Activated CD4-positive, alpha-beta T cell treated with anti-CD3 and anti-CD28 coated beads for 36 hours (primary cell): ENCODE measurements at regions of chr13 and their contacts with region 1.

Region 1: DNA sequence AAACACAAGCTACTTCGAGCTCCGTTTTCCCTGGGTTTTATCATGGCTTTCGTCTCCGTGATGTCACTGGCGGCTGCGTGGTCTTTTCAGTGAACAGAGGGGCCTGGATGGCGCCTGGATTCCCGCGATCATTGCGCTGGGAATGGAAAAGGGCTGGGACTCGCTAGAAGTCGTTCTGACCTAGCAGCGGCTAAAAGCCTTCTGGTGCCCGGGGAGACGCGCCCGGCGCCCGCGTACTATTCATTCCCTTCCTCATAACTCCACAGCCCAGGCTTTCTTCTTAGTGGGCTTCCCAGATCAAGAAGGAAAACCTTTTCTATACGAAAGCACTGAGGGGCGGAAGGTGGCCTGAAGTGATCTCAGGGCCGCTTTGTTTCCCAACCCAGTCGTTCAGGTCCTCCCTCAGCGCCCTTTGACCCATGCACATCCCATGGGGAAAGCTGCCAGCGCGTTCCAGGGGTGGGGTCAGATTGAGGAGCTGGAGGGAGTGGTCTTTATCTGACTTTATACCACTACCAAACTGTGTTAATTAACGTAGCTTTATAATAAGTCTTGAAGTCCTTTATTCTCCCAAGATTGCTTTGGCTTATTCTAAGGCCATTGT is 96.6 kb downstream of the ELF1 start:
- DNase-seq: no peak
- ATAC-seq: no peak
- H3K4me3 Mint-ChIP-seq: peak overlapping the region; percentile 32
- H3K27ac Mint-ChIP-seq: peak overlapping the region; percentile 76
- H3K4me1 Mint-ChIP-seq: peaks cover 20% of the 10 kb centered on the region
- H3K27me3 Mint-ChIP-seq: no peaks in the 10 kb centered on the region

Region 2: GRCh38 chr13:40770934-40771618 is 151.5 kb before region 1 on chr13 and contains the start of gene MRPS31:
- CTCF ChIA-PET with region 1: interaction called, 3 read pairs
- POLR2A ChIA-PET with region 1: no interaction called
- intact Hi-C with region 1: loop called (anchors 2 kb)
- DNase-seq: peak; percentile 97
- ATAC-seq: peak; percentile 99
- H3K4me3 Mint-ChIP-seq: peak within 1 kb of the TSS; percentile 89
- H3K27ac Mint-ChIP-seq: peak within 1 kb of the TSS; percentile 97
- H3K4me1 Mint-ChIP-seq: peaks cover 30% of the 10 kb centered on the region
- H3K27me3 Mint-ChIP-seq: no peaks in the 10 kb centered on the region
- total RNA-seq, gene MRPS31: 45.8 to 46.1 TPM

Region 3: GRCh38 chr13:40777166-40777808 is 145.3 kb before region 1 on chr13:
- CTCF ChIA-PET with region 1: interaction called, 6 read pairs
- POLR2A ChIA-PET with region 1: no interaction called
- intact Hi-C with region 1: loop called in 1 of 2 experiments (anchors 2 kb)
- DNase-seq: peak; percentile 57
- ATAC-seq: peak; percentile 49
- H3K4me3 Mint-ChIP-seq: peak overlapping the region; percentile 52
- H3K27ac Mint-ChIP-seq: peak overlapping the region; percentile 98
- H3K4me1 Mint-ChIP-seq: peaks cover 29% of the 10 kb centered on the region
- H3K27me3 Mint-ChIP-seq: no peaks in the 10 kb centered on the region

Region 4: GRCh38 chr13:40910324-40911050 is 12.1 kb before region 1 on chr13:
- CTCF ChIA-PET with region 1: interaction called, 3 read pairs
- POLR2A ChIA-PET with region 1: no interaction called
- intact Hi-C with region 1: loop called in 1 of 2 experiments (anchors 1 kb)
- DNase-seq: peak; percentile 45
- ATAC-seq: peak; percentile 90
- H3K4me3 Mint-ChIP-seq: no peak overlapping the region
- H3K27ac Mint-ChIP-seq: no peak overlapping the region
- H3K4me1 Mint-ChIP-seq: peaks cover 20% of the 10 kb centered on the region
- H3K27me3 Mint-ChIP-seq: no peaks in the 10 kb centered on the region

Region 5: GRCh38 chr13:40982772-40983171 is 60.2 kb after region 1 on chr13:
- CTCF ChIA-PET with region 1: interaction called, 5 read pairs
- POLR2A ChIA-PET with region 1: interaction called, 4 read pairs
- intact Hi-C with region 1: loop called in 1 of 2 experiments (anchors 2 kb)
- DNase-seq: peak; percentile 70
- ATAC-seq: peak; percentile 62
- H3K4me3 Mint-ChIP-seq: peak overlapping the region; percentile 91
- H3K27ac Mint-ChIP-seq: peak overlapping the region; percentile 92
- H3K4me1 Mint-ChIP-seq: peaks cover 66% of the 10 kb centered on the region
- H3K27me3 Mint-ChIP-seq: no peaks in the 10 kb centered on the region

Region 6: DNA sequence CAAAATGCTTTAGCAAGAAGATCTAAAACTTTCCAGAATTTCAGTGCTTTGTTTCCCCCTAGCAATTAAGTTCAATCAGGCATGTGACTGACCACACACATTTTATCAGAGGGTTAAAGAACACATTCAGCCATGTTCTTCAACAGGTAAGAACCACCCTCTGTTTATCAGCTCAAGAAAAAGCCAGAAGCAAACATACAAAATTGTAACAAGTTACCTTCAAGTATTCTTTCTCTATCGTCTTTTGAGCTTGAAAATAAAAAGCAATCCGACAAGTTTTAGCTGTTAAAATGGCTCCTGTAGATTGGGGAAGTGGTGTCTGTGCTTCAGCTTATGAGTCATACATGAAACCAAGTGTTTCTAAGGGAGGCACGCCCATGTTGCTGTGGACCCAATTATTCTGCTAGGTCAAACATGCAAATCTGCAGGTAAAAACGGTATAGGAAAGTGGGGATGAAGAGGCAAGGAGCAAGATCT is 96.5 kb after region 1 on chr13 and contains the start of gene ELF1:
- CTCF ChIA-PET with region 1: interaction called, 4 read pairs
- POLR2A ChIA-PET with region 1: interaction called, 3 read pairs
- intact Hi-C with region 1: loop called (anchors 1 to 5 kb)
- DNase-seq: peak; percentile 67
- ATAC-seq: peak; percentile 87
- H3K4me3 Mint-ChIP-seq: peak within 1 kb of the TSS; percentile 88
- H3K27ac Mint-ChIP-seq: peak within 1 kb of the TSS; percentile 96
- H3K4me1 Mint-ChIP-seq: peaks cover 31% of the 10 kb centered on the region
- H3K27me3 Mint-ChIP-seq: no peaks in the 10 kb centered on the region
- total RNA-seq, gene ELF1: 75.2 to 87.0 TPM

Region 7: DNA sequence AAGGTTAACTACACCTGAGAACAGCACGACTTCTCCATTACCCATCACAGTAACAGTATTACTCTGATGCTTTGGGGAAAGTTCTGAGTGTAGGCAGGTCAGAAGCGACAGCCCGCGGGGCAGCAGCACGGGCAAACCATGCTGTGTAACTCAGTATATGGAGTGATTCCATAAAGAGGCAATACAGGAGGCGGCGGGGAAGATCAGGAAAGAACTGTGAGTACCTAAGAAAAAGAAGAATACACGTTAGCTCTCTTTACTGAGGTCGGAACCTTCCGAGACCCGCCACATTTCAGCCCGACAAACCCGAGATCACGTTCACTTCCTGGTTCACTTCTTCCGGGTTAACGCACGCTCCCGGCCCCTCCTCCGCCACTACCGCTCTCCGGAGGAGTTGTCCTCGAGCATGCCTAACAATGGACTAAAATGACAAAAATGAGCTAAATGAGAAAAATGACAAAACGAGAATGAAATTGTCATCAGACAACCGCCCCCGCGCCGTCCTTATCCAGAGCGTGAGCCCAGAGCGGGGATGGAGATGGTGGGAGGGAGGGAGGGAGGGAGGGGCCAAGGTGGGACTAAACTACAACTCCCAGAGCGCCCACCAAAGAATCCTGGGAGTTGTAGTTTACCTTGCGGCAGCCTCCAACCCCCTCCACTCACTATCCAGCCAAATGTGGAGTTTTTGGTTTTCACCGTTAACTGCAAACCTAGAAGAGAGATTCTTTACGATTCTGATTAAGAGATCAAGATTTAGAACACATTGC is 340.9 kb after region 1 on chr13 and contains the start of gene MTRF1:
- CTCF ChIA-PET with region 1: no interaction called
- POLR2A ChIA-PET with region 1: no interaction called
- intact Hi-C with region 1: loop called in 1 of 2 experiments (anchors 5 kb)
- DNase-seq: peak; percentile 89
- ATAC-seq: peak; percentile 93
- H3K4me3 Mint-ChIP-seq: peak within 1 kb of the TSS; percentile 80
- H3K27ac Mint-ChIP-seq: peak within 1 kb of the TSS; percentile 95
- H3K4me1 Mint-ChIP-seq: peaks cover 12% of the 10 kb centered on the region
- H3K27me3 Mint-ChIP-seq: no peaks in the 10 kb centered on the region
- total RNA-seq, gene MTRF1: 19.7 to 22.1 TPM

Region 8: GRCh38 chr13:42275098-42275471 is 1352.5 kb after region 1 on chr13:
- CTCF ChIA-PET with region 1: no interaction called
- POLR2A ChIA-PET with region 1: no interaction called
- intact Hi-C with region 1: no loop called
- DNase-seq: no peak
- ATAC-seq: peak; percentile 5
- H3K4me3 Mint-ChIP-seq: peak overlapping the region; percentile 99
- H3K27ac Mint-ChIP-seq: peak overlapping the region; percentile 88
- H3K4me1 Mint-ChIP-seq: peaks cover 51% of the 10 kb centered on the region
- H3K27me3 Mint-ChIP-seq: no peaks in the 10 kb centered on the region